Left ventricle myocardium inferior (tissue), 1 donor: ENCODE measurements at regions of chr12 and their contacts with region 1.

Region 1: DNA sequence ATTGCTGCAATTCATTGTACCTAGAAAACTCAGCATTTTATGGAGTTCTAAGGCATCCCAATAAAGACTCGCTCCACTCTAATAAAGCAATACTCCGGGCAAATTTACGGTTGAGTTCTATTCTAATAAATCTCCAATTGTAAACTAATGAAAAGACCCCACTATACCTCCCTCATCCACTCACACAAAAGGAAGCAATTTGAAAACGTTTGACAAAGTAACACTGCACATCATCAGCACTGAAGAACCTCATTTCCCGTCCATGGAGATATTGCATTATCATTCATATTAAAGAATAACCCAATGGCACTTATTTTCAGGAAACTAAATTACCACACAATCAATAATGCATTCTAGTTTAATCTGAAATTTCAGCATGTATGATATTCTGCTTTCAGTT is 111.0 kb upstream of the LMO3 start:
- DNase-seq: no peak
- H3K4me3 ChIP-seq: no peak overlapping the region
- H3K27ac ChIP-seq: no peak overlapping the region
- H3K4me1 ChIP-seq: no peaks in the 10 kb centered on the region
- H3K27me3 ChIP-seq: no peaks in the 10 kb centered on the region
- CTCF ChIP-seq: no peak

Region 2: DNA sequence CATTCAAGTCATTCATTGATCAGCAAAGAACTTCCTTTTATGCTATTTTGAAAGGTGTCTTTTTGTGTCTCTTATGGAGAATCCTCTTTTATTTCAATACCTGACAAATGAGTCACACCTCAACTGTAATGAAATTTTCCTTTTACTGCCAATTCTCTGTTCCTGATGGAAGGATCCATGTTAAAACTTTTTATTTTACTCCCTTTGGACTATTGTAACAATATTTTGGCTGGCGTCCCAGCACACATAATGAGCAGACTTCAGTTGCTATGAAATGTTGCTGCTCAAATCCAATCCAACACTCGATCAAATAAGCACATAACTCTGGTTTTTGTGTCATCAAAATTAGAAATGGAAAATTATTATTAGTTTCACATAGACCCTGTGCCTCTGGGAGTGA is 417.5 kb before region 1 on chr12:
- intact Hi-C with region 1: no loop called
- DNase-seq: no peak
- H3K4me3 ChIP-seq: no peak overlapping the region
- H3K27ac ChIP-seq: peak overlapping the region; percentile 77
- H3K4me1 ChIP-seq: no peaks in the 10 kb centered on the region
- H3K27me3 ChIP-seq: no peaks in the 10 kb centered on the region
- CTCF ChIP-seq: no peak

Region 3: GRCh38 chr12:16553457-16553856 is 163.5 kb before region 1 on chr12:
- intact Hi-C with region 1: loop called (anchors 5 kb)
- DNase-seq: no peak
- H3K4me3 ChIP-seq: no peak overlapping the region
- H3K27ac ChIP-seq: no peak overlapping the region
- H3K4me1 ChIP-seq: no peaks in the 10 kb centered on the region
- H3K27me3 ChIP-seq: no peaks in the 10 kb centered on the region
- CTCF ChIP-seq: no peak